ENCODE measurements at regions of chr20 and their contacts with region 1.

Region 1: GRCh38 chr20:50165684-50166554 is 12.4 kb upstream of the PEDS1 start:
- DNase-seq: peak; percentile 82
- ATAC-seq: peak; percentile 99
- H3K4me3 ChIP-seq: peak overlapping the region; percentile 40
- H3K27ac ChIP-seq: peak overlapping the region; percentile 57
- H3K4me1 ChIP-seq: peaks cover 6% of the 10 kb centered on the region; the same call in 1 of the 2 replicates
- H3K27me3 ChIP-seq: no peaks in the 10 kb centered on the region
- CTCF ChIP-seq: no peak
- EP300 ChIP-seq: peak in 1 of 2 experiments; percentile 43; a peak in 1 of 4 replicates
- POLR2A ChIP-seq: peak; percentile 79
- RAD21 ChIP-seq: no peak

Region 2: GRCh38 chr20:49982346-49983122 is 183.4 kb before region 1 on chr20 and contains the start of gene SNAI1:
- CTCF ChIA-PET with region 1: interaction called, 37 read pairs
- POLR2A ChIA-PET with region 1: no interaction called
- RAD21 ChIA-PET with region 1: interaction called, 10 read pairs
- SMC1A ChIA-PET with region 1: interaction called, 8 read pairs
- in situ Hi-C with region 1: loop called (anchors 5 kb)
- intact Hi-C with region 1: loop called (anchors 2 kb)
- DNase-seq: peak; percentile 32
- ATAC-seq: peak; percentile 96
- H3K4me3 ChIP-seq: peak within 1 kb of the TSS; percentile 58
- H3K27ac ChIP-seq: no peak within 1 kb of the TSS
- H3K4me1 ChIP-seq: no peaks in the 10 kb centered on the region; the same call in 1 of the 2 replicates
- H3K27me3 ChIP-seq: no peaks in the 10 kb centered on the region
- CTCF ChIP-seq: peak; percentile 40 to 51 (median 42); a peak in 5 of 6 replicates
- EP300 ChIP-seq: no peak
- POLR2A ChIP-seq: peak; percentile 97
- RAD21 ChIP-seq: no peak
- polyA plus RNA-seq, gene SNAI1: not detected

Region 3: GRCh38 chr20:50115591-50116372 is 50.1 kb before region 1 on chr20:
- CTCF ChIA-PET with region 1: interaction called, 219 read pairs
- POLR2A ChIA-PET with region 1: interaction called, 7 read pairs
- RAD21 ChIA-PET with region 1: interaction called, 58 read pairs
- SMC1A ChIA-PET with region 1: interaction called, 70 read pairs
- in situ Hi-C with region 1: no loop called
- intact Hi-C with region 1: no loop called
- DNase-seq: peak; percentile 89
- ATAC-seq: peak; percentile 80
- H3K4me3 ChIP-seq: peak overlapping the region; percentile 96
- H3K27ac ChIP-seq: peak overlapping the region; percentile 65
- H3K4me1 ChIP-seq: peaks cover 22% of the 10 kb centered on the region
- H3K27me3 ChIP-seq: no peaks in the 10 kb centered on the region
- CTCF ChIP-seq: no peak
- EP300 ChIP-seq: no peak
- POLR2A ChIP-seq: peak; percentile 77
- RAD21 ChIP-seq: no peak

Region 4: GRCh38 chr20:50120897-50121693 is 44.8 kb before region 1 on chr20:
- CTCF ChIA-PET with region 1: interaction called, 219 read pairs
- POLR2A ChIA-PET with region 1: interaction called, 3 read pairs
- RAD21 ChIA-PET with region 1: interaction called, 58 read pairs
- SMC1A ChIA-PET with region 1: interaction called, 70 read pairs
- in situ Hi-C with region 1: no loop called
- intact Hi-C with region 1: loop called (anchors 1 kb)
- DNase-seq: no peak
- ATAC-seq: peak; percentile 88
- H3K4me3 ChIP-seq: no peak overlapping the region
- H3K27ac ChIP-seq: no peak overlapping the region
- H3K4me1 ChIP-seq: peaks cover 4% of the 10 kb centered on the region
- H3K27me3 ChIP-seq: no peaks in the 10 kb centered on the region
- CTCF ChIP-seq: peak; percentile 74 to 89 (median 87)
- EP300 ChIP-seq: no peak
- POLR2A ChIP-seq: peak; percentile 40; the same call in 1 of the 2 replicates
- RAD21 ChIP-seq: peak; percentile 79

Region 5: GRCh38 chr20:50146732-50147662 is 18.9 kb before region 1 on chr20:
- CTCF ChIA-PET with region 1: interaction called, 23 read pairs
- POLR2A ChIA-PET with region 1: interaction called, 4 read pairs
- RAD21 ChIA-PET with region 1: interaction called, 19 read pairs
- SMC1A ChIA-PET with region 1: interaction called, 12 read pairs
- in situ Hi-C with region 1: no loop called
- intact Hi-C with region 1: no loop called
- DNase-seq: peak; percentile 45
- ATAC-seq: peak; percentile 96
- H3K4me3 ChIP-seq: peak overlapping the region; percentile 62; the same call in 1 of the 2 replicates
- H3K27ac ChIP-seq: peak overlapping the region; percentile 93
- H3K4me1 ChIP-seq: peaks cover 15% of the 10 kb centered on the region
- H3K27me3 ChIP-seq: no peaks in the 10 kb centered on the region
- CTCF ChIP-seq: no peak
- EP300 ChIP-seq: peak; percentile 8 to 23; a peak in 1 of 4 replicates
- POLR2A ChIP-seq: peak; percentile 80
- RAD21 ChIP-seq: no peak

Region 6: GRCh38 chr20:50153485-50154377 is 12.2 kb before region 1 on chr20 and contains the start of gene PEDS1:
- CTCF ChIA-PET with region 1: interaction called, 23 read pairs
- POLR2A ChIA-PET with region 1: interaction called, 31 read pairs
- RAD21 ChIA-PET with region 1: interaction called, 19 read pairs
- SMC1A ChIA-PET with region 1: interaction called, 14 read pairs
- in situ Hi-C with region 1: no loop called
- intact Hi-C with region 1: no loop called
- DNase-seq: peak; percentile 45
- ATAC-seq: peak; percentile 98
- H3K4me3 ChIP-seq: peak within 1 kb of the TSS; percentile 98
- H3K27ac ChIP-seq: peak within 1 kb of the TSS; percentile 75
- H3K4me1 ChIP-seq: peaks cover 8% of the 10 kb centered on the region
- H3K27me3 ChIP-seq: no peaks in the 10 kb centered on the region
- CTCF ChIP-seq: no peak
- EP300 ChIP-seq: 0 out of 4 replicates have a peak, but pooled peaks of 1 of the 2 experiments have one; percentile 17
- POLR2A ChIP-seq: peak; percentile 94
- RAD21 ChIP-seq: no peak
- polyA plus RNA-seq, gene PEDS1: 1.7 to 4.3 TPM

Region 7: GRCh38 chr20:50179507-50180016 is 13.6 kb after region 1 on chr20:
- CTCF ChIA-PET with region 1: interaction called, 21 read pairs
- POLR2A ChIA-PET with region 1: no interaction called
- RAD21 ChIA-PET with region 1: interaction called, 3 read pairs
- SMC1A ChIA-PET with region 1: interaction called, 5 read pairs
- in situ Hi-C with region 1: no loop called
- intact Hi-C with region 1: no loop called
- DNase-seq: no peak
- ATAC-seq: peak; percentile 44
- H3K4me3 ChIP-seq: no peak overlapping the region
- H3K27ac ChIP-seq: no peak overlapping the region
- H3K4me1 ChIP-seq: no peaks in the 10 kb centered on the region
- H3K27me3 ChIP-seq: no peaks in the 10 kb centered on the region
- CTCF ChIP-seq: no peak
- EP300 ChIP-seq: no peak
- POLR2A ChIP-seq: no peak
- RAD21 ChIP-seq: no peak